AG04449 (cell line): ENCODE measurements at regions of chr2 and their contacts with region 1.

Region 1: GRCh38 chr2:60998628-60999545 is 18.6 kb upstream of the PEX13 start:
- DNase-seq: no peak
- H3K4me3 ChIP-seq: no peak overlapping the region
- CTCF ChIP-seq: peak; percentile 25

Region 2: DNA sequence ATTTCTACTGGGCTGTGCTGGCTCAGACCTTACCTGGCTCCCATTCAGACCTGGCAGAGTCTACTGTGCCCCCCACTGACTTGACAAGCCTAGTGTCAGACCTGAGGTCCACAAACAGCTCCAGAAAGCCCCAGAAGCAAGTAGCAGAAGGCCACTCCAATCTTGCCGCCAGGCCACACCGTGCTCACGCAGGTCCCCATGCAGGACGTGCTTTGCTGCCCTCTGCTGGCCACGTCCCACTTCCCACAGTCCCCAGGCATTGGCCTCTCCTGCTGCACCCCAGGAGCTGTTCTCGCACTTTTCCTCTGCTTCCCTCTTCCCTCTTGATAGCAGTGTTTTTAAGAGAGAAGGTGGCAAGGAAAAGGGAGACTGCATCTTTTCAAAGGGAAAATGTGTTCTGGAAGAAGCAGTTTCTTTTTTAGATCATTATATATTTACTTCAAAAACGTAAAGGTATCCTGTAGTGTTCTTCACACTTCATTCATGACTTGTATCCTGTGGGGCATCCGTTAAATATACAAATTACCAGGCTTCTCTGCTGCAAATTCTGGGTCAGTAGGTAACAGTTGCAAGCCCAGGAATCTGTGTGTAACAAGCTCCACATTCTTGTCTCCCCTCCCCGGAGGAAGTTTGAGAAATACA is 324.2 kb before region 1 on chr2:
- CTCF ChIA-PET with region 1: interaction called, 36 read pairs
- POLR2A ChIA-PET with region 1: no interaction called
- DNase-seq: peak; percentile 19
- H3K4me3 ChIP-seq: no peak overlapping the region
- CTCF ChIP-seq: peak; percentile 97

Region 3: GRCh38 chr2:60756191-60757041 is 242.5 kb before region 1 on chr2 and contains the start of gene PAPOLG:
- CTCF ChIA-PET with region 1: interaction called, 16 read pairs
- POLR2A ChIA-PET with region 1: no interaction called
- DNase-seq: peak; percentile 42
- H3K4me3 ChIP-seq: peak within 1 kb of the TSS; percentile 98
- CTCF ChIP-seq: no peak

Region 4: DNA sequence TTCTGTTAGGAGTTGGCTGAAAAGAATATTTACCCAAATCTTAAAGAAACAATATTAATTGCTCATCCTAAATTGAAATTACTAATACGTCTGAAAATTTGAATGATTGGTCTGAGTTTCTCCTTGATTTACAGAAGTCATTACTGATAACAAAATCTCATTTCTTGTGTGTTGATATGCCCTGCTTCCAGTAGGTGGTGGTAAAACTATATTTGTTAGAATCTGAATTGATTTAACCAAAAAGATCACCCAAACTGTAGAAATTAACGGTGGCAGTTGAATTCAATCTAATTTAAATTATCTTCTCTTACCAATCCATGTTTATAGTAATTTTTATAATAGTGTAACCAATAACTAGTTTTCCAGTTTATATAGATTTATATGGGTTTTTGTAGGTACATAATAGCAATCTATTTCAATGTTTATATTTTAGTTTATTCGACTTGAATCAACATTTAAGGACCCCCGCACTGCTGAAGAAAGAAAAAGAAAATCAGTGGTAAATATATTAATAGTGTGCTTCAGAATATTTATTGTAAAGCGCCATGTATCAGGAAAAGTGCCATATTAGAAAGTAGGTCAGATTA is 204.5 kb before region 1 on chr2:
- CTCF ChIA-PET with region 1: interaction called, 91 read pairs
- POLR2A ChIA-PET with region 1: no interaction called
- DNase-seq: no peak
- H3K4me3 ChIP-seq: no peak overlapping the region
- CTCF ChIP-seq: peak; percentile 25

Region 5: GRCh38 chr2:60966507-60967405 is 32.1 kb before region 1 on chr2:
- CTCF ChIA-PET with region 1: interaction called, 16 read pairs
- POLR2A ChIA-PET with region 1: no interaction called
- DNase-seq: no peak
- H3K4me3 ChIP-seq: no peak overlapping the region
- CTCF ChIP-seq: no peak